Activated CD8-positive, alpha-beta T cell treated with anti-CD3 and anti-CD28 coated beads for 36 hours (primary cell): ENCODE measurements at regions of chr22 and their contacts with region 1.

Region 1: GRCh38 chr22:38872172-38872830 is at the start of gene CBX6:
- DNase-seq: peak; percentile 95
- ATAC-seq: peak; percentile 64
- H3K4me3 Mint-ChIP-seq: peak within 1 kb of the TSS; percentile 92
- H3K27ac Mint-ChIP-seq: peak within 1 kb of the TSS; percentile 94
- H3K4me1 Mint-ChIP-seq: peaks cover 58% of the 10 kb centered on the region
- H3K27me3 Mint-ChIP-seq: no peaks in the 10 kb centered on the region
- CTCF ChIP-seq: no peak
- total RNA-seq, gene CBX6: 97.7 to 99.4 TPM

Region 2: GRCh38 chr22:38681784-38682335 is 190.4 kb before region 1 on chr22 and contains the start of gene TOMM22:
- CTCF ChIA-PET with region 1: no interaction called
- POLR2A ChIA-PET with region 1: no interaction called
- intact Hi-C with region 1: no loop called
- DNase-seq: peak; percentile 89
- ATAC-seq: peak; percentile 98
- H3K4me3 Mint-ChIP-seq: peak within 1 kb of the TSS; percentile 97
- H3K27ac Mint-ChIP-seq: peak within 1 kb of the TSS; percentile 96
- H3K4me1 Mint-ChIP-seq: peaks cover 26% of the 10 kb centered on the region
- H3K27me3 Mint-ChIP-seq: no peaks in the 10 kb centered on the region
- CTCF ChIP-seq: no peak
- total RNA-seq, gene TOMM22: 155 to 158 TPM

Region 3: DNA sequence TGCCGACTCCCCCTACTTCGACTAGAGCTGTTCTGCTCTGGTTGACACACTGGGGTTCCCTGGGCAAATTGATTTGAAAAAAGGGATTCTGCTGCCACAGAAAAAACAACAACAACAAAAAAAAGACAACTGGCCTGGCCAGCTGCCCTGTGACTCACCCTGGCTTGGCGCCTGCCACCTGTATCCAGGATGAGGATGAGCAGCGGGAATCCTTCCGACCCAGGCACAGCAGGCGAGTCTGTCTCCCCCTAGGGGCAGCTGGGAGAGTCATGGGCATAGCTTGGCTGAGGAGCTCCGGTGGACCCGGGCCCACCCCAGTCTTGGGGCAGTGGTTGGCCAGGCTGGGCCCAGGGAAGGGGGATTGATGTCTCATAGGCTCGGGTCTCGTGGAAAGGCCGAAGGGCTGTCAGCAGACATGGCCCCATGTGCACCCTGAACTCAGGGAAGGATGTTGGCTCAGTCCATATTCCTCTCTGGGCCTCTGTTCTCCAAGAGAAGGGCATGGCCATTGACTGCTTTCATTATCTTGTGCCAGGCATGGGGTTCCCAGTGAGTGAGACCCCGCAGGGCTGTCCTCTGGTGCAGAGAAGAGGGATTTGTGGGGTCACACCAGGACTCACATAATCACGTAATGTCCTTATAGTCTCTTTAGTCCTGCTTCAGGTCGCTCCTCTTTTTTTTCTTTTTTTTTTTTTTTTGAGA is 106.1 kb before region 1 on chr22:
- CTCF ChIA-PET with region 1: interaction called, 44 read pairs
- POLR2A ChIA-PET with region 1: interaction called, 5 read pairs
- intact Hi-C with region 1: no loop called
- DNase-seq: peak; percentile 50
- ATAC-seq: peak; percentile 45
- H3K4me3 Mint-ChIP-seq: no peak overlapping the region
- H3K27ac Mint-ChIP-seq: no peak overlapping the region
- H3K4me1 Mint-ChIP-seq: no peaks in the 10 kb centered on the region
- H3K27me3 Mint-ChIP-seq: no peaks in the 10 kb centered on the region
- CTCF ChIP-seq: peak; percentile 84

Region 4: DNA sequence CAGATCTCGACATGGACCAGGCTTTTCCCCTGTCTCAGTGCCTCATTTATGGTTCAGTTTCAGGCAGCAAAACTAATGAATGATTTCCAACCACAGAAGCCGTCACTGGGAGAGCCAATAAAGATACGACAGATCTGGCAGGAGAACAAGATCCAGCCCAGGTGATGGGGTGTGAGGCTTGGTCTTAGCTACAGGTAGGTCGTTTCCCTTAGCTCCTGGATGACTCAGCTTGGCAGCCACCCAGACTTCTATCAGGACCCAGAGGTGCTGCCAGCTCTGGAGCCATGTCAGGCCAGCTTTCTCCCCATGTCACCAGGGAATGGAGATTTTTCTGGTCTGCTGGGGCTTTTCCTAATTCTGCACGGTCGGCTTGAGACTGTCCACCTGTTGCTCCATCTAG is 48.8 kb after region 1 on chr22:
- CTCF ChIA-PET with region 1: interaction called, 11 read pairs
- POLR2A ChIA-PET with region 1: no interaction called
- intact Hi-C with region 1: no loop called
- DNase-seq: no peak
- ATAC-seq: no peak
- H3K4me3 Mint-ChIP-seq: no peak overlapping the region
- H3K27ac Mint-ChIP-seq: no peak overlapping the region
- H3K4me1 Mint-ChIP-seq: no peaks in the 10 kb centered on the region
- H3K27me3 Mint-ChIP-seq: peaks cover 22% of the 10 kb centered on the region
- CTCF ChIP-seq: no peak

Region 5: DNA sequence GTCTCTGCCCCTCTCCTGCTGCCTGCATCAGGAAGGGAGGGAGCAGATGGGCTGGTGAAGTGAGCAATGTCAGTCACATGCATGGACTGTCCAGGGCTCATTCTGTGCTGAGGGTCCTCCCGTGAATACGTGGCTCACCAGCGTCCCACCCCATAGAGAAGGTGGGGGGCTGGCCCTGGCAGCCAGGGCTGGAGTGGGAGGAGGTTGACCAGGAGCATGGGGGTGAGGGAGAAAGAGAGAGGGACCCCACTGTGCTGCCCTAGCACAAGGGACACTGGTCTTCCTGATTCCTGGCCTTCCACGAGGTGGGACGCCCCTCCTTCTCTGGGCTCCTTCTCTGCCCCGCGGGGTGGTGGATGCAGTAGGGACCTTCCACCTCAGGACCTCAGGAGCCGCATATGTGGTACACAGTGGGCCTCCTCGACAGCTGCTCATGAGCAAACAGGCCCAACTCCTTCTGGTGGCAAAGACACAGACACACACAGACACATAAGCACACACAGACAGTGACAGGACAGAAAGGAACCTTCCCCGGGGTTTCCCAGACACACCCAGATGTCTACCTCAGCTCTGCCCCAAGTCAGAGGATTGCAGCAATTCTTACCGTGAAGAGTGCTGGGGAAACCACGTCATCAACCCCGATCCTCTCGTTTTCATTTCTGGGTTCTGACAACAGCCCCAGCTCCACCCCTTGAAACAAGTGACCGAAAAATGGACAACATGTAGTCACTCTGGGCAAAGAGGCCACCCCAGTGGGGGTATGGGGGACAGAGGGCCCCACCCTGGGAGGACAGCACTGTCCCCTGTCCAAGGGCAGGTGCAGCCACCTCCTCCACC is 81.5 kb after region 1 on chr22:
- CTCF ChIA-PET with region 1: interaction called, 17 read pairs
- POLR2A ChIA-PET with region 1: interaction called, 5 read pairs
- intact Hi-C with region 1: no loop called
- DNase-seq: peak; percentile 89
- ATAC-seq: peak; percentile 93
- H3K4me3 Mint-ChIP-seq: peak overlapping the region; percentile 22
- H3K27ac Mint-ChIP-seq: peak overlapping the region; percentile 89
- H3K4me1 Mint-ChIP-seq: peaks cover 28% of the 10 kb centered on the region
- H3K27me3 Mint-ChIP-seq: peaks cover 9% of the 10 kb centered on the region
- CTCF ChIP-seq: no peak

Region 6: GRCh38 chr22:38981992-38982927 is 110.0 kb after region 1 on chr22 and contains the start of gene APOBEC3B:
- CTCF ChIA-PET with region 1: interaction called, 39 read pairs
- POLR2A ChIA-PET with region 1: interaction called, 3 read pairs
- intact Hi-C with region 1: loop called (anchors 2 kb)
- DNase-seq: peak; percentile 85
- ATAC-seq: peak; percentile 74
- H3K4me3 Mint-ChIP-seq: peak within 1 kb of the TSS; percentile 38
- H3K27ac Mint-ChIP-seq: peak within 1 kb of the TSS; percentile 63
- H3K4me1 Mint-ChIP-seq: peaks cover 51% of the 10 kb centered on the region
- H3K27me3 Mint-ChIP-seq: no peaks in the 10 kb centered on the region
- CTCF ChIP-seq: no peak
- total RNA-seq, gene APOBEC3B: 5.0 to 5.1 TPM

Region 7: DNA sequence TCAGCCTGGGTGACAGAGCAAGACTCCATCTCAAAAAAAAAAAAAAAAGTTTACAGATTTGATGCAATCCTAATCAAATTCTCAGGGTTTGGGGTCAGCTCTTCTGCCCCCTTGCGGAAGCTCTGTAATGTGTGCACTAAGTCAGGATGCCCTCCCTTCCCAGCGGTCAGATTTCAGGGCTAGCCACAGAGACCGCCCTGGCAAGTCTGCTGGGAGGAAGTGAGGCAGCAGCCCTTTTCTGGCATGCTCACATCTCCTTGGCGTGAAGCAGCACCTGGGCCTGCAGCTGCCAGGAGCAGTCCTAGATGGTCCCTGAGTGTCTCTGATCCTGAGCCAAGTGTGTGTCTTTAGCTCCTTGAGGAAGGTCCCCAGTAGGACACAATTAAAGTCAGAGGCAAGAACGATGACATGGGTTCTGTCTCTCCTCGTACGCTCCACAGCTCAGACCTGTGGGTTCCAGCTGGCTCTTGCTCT is 130.9 kb after region 1 on chr22:
- CTCF ChIA-PET with region 1: interaction called, 130 read pairs
- POLR2A ChIA-PET with region 1: interaction called, 9 read pairs
- intact Hi-C with region 1: loop called (anchors 5 kb)
- DNase-seq: peak; percentile 90
- ATAC-seq: peak; percentile 95
- H3K4me3 Mint-ChIP-seq: no peak overlapping the region
- H3K27ac Mint-ChIP-seq: no peak overlapping the region
- H3K4me1 Mint-ChIP-seq: peaks cover 5% of the 10 kb centered on the region
- H3K27me3 Mint-ChIP-seq: peaks cover 1% of the 10 kb centered on the region
- CTCF ChIP-seq: peak; percentile 71

Region 8: GRCh38 chr22:39152511-39153219 is 280.4 kb after region 1 on chr22 and contains the start of gene CBX7:
- CTCF ChIA-PET with region 1: interaction called, 11 read pairs
- POLR2A ChIA-PET with region 1: interaction called, 4 read pairs
- intact Hi-C with region 1: no loop called
- DNase-seq: peak; percentile 91
- ATAC-seq: peak; percentile 78
- H3K4me3 Mint-ChIP-seq: peak within 1 kb of the TSS; percentile 74
- H3K27ac Mint-ChIP-seq: peak within 1 kb of the TSS; percentile 78
- H3K4me1 Mint-ChIP-seq: peaks cover 44% of the 10 kb centered on the region
- H3K27me3 Mint-ChIP-seq: peaks cover 14% of the 10 kb centered on the region
- CTCF ChIP-seq: no peak
- total RNA-seq, gene CBX7: 23.6 to 25.0 TPM